Kidney (tissue), 22 donors: ENCODE measurements at regions of chr17 and their contacts with region 1.

Region 1: GRCh38 chr17:82917691-82918345 is 78.0 kb upstream of the ZNF750 start:
- DNase-seq: peak in 1 of 5 donors; percentile 73
- H3K4me3 ChIP-seq: no peak overlapping the region
- H3K27ac ChIP-seq: no peak overlapping the region
- H3K4me1 ChIP-seq: no peaks in the 10 kb centered on the region
- H3K27me3 ChIP-seq: no peaks in the 10 kb centered on the region
- CTCF ChIP-seq: peak; percentile 14

Region 2: GRCh38 chr17:82751571-82752370 is 166.0 kb before region 1 on chr17 and contains the start of gene TBCD:
- intact Hi-C with region 1: no loop called
- DNase-seq: peak; percentile 94 to 96 (median 95)
- H3K4me3 ChIP-seq: peak within 1 kb of the TSS; percentile 56 to 74 (median 62)
- H3K27ac ChIP-seq: peak within 1 kb of the TSS; percentile 76 to 81
- H3K4me1 ChIP-seq: peaks cover 0 to 8% (median 5%) of the 10 kb centered on the region in 3 donors
- H3K27me3 ChIP-seq: no peaks in the 10 kb centered on the region
- CTCF ChIP-seq: no peak
- total RNA-seq, gene TBCD: 72.8 TPM

Region 3: DNA sequence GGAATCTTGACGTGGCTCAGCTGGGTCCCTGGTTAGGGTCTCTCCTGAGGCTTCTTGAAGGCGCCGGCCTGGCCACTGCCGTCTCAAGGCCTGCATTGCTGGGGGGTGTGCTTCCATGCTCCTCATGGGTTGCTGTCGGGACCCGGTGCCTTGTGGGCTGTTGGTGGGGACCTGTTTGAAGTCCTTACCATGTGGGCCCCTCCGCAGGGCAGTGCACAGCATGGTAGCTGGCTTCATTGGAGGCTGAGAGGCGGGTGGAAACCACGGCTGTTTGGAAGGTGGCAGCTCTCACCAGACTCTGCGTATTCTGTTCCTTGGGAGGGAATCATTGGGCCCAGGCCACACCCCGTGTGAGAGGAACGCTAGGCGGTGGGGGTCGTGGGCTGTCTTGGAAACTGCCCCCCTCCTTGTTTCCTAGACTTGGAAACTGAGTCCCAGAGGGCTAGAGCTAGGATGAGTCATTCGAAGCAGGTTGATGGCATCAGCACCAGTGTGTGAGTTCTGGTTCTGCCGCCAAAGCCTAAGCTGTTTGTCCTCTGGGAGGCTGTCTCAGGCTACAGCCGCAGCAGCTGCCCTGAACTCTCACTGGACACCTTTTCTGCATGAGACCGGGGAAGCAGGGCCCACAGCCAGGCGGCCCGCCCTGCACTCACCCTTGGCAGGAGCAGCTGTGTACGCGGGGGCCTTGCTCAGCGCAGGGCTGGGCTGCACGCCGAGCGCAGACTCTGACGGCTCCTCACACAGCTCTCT is 113.2 kb before region 1 on chr17:
- intact Hi-C with region 1: loop called (anchors 10 kb)
- DNase-seq: peak in 1 of 5 donors; percentile 76
- H3K4me3 ChIP-seq: no peak overlapping the region
- H3K27ac ChIP-seq: no peak overlapping the region
- H3K4me1 ChIP-seq: no peaks in the 10 kb centered on the region
- H3K27me3 ChIP-seq: no peaks in the 10 kb centered on the region
- CTCF ChIP-seq: no peak